CD4-positive, alpha-beta memory T cell (primary cell): ENCODE measurements at regions of chr5 and their contacts with region 1.

Region 1: GRCh38 chr5:68433923-68434879 is 218.6 kb downstream of the PIK3R1 start:
- DNase-seq: peak; percentile 76 to 98 (median 83)
- H3K4me3 ChIP-seq: peak overlapping the region; percentile 7 to 42
- H3K4me3 Mint-ChIP-seq: peak overlapping the region; percentile 73 to 89 (median 80)
- H3K27ac ChIP-seq: peak overlapping the region; percentile 54
- H3K27ac Mint-ChIP-seq: peak overlapping the region; percentile 88 to 95 (median 91)
- H3K4me1 ChIP-seq: peaks cover 40% of the 10 kb centered on the region
- H3K4me1 Mint-ChIP-seq: peaks cover 29 to 39% (median 36%) of the 10 kb centered on the region in 4 donors
- H3K27me3 ChIP-seq: no peaks in the 10 kb centered on the region
- H3K27me3 Mint-ChIP-seq: no peaks in the 10 kb centered on the region

Region 2: GRCh38 chr5:68384936-68385594 is 49.1 kb before region 1 on chr5:
- CTCF ChIA-PET with region 1: no interaction called
- POLR2A ChIA-PET with region 1: interaction called, 5 read pairs
- intact Hi-C with region 1: loop called (anchors 5 kb)
- DNase-seq: no peak
- H3K4me3 ChIP-seq: no peak overlapping the region
- H3K4me3 Mint-ChIP-seq: peak overlapping the region in 3 of 8 donors; percentile 15 to 36 (median 29)
- H3K27ac ChIP-seq: no peak overlapping the region
- H3K27ac Mint-ChIP-seq: peak overlapping the region in 3 of 7 donors; percentile 7 to 43 (median 32)
- H3K4me1 ChIP-seq: peaks cover 41% of the 10 kb centered on the region
- H3K4me1 Mint-ChIP-seq: peaks cover 30 to 54% (median 41%) of the 10 kb centered on the region in 4 donors
- H3K27me3 ChIP-seq: no peaks in the 10 kb centered on the region
- H3K27me3 Mint-ChIP-seq: no peaks in the 10 kb centered on the region